ENCODE measurements at regions of chr15 and their contacts with region 1.

Region 1: GRCh38 chr15:68550481-68551295 is 28.1 kb upstream of the CORO2B start:
- DNase-seq: peak; percentile 74
- CTCF ChIP-seq: peak; percentile 81

Region 2: GRCh38 chr15:68464448-68465090 is 86.1 kb before region 1 on chr15:
- CTCF ChIA-PET with region 1: no interaction called
- POLR2A ChIA-PET with region 1: no interaction called
- DNase-seq: no peak
- CTCF ChIP-seq: no peak

Region 3: GRCh38 chr15:68526269-68526668 is 24.4 kb before region 1 on chr15:
- CTCF ChIA-PET with region 1: interaction called, 37 read pairs
- POLR2A ChIA-PET with region 1: no interaction called
- DNase-seq: no peak
- CTCF ChIP-seq: no peak

Region 4: DNA sequence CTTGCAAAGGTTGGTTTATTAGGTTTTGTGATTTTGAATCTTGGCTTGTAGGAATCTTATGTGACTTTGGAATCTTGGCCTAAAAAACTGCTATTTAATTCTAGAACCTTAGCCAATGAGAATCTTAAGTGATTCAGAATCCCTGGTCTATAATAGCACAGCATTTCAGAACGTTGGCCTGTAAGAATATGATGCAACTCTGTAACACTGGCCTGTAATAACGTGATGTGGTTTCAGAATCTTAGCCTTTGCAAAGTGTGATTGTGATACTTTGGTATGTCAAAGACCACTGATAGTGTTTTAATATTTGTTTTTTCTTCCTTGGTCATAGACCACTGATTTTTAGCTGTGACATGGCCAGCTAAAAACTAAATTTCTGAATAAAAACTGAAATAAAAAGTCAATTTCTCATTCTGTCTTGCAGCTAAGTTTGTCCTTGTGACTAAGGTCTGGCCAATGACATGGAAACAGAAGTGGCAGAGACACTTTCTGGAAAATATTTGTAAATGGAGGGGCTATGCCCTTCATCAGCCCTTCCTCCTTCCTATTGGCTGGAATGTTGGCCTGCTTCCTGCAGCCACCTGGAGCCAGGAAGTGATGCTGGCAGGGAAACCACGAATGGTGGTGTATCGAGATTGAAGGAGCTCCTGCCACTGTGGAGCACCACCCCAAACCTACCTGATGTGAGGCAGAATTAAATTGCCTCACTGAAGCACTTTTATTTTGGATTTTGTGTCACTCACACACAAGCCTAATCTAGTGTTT is 14.2 kb before region 1 on chr15:
- CTCF ChIA-PET with region 1: interaction called, 29 read pairs
- POLR2A ChIA-PET with region 1: no interaction called
- DNase-seq: no peak
- CTCF ChIP-seq: no peak

Region 5: DNA sequence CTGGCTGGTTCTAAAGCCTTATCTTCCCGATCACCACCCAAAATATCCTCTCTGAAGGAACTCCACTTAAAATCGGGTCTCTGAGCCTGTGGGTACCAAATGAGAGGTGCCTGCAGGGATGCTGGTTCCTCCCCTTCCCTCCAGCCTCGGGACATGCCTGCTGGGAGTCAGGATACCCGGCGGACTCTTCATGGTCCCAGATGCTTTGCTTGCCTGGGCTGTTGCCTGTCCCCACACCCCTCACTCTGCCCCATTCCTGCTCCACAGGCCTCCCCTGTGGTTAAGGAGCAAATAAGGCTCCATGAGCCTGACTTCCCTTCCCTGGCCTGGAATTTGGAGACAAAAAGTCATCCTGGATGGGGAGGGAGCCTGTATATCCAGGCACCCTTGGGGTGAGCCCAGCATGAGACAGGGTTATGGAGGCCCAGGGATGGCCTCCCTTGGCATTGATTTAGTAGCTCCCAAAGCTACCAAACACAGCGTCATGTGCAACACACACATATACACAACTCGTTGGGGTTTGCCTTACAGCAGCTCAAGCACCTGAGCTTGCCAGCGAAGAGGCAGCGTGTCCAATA is 15.8 kb after region 1 on chr15:
- CTCF ChIA-PET with region 1: interaction called, 64 read pairs
- POLR2A ChIA-PET with region 1: no interaction called
- DNase-seq: no peak
- CTCF ChIP-seq: no peak

Region 6: GRCh38 chr15:68679961-68680371 is 129.3 kb after region 1 on chr15:
- CTCF ChIA-PET with region 1: interaction called, 57 read pairs
- POLR2A ChIA-PET with region 1: no interaction called
- DNase-seq: no peak
- CTCF ChIP-seq: no peak

Region 7: GRCh38 chr15:68924866-68925560 is 374.3 kb after region 1 on chr15:
- CTCF ChIA-PET with region 1: interaction called, 19 read pairs
- POLR2A ChIA-PET with region 1: no interaction called
- DNase-seq: peak; percentile 65
- CTCF ChIP-seq: peak; percentile 68

Measured in GM10248 (cell line).